Mammary epithelial cell (primary cell): ENCODE measurements at regions of chr6 and their contacts with region 1.

Region 1: GRCh38 chr6:149190224-149190831 is 127.2 kb upstream of the TAB2 start:
- DNase-seq: peak; percentile 57
- H3K4me3 ChIP-seq: no peak overlapping the region
- H3K27ac ChIP-seq: no peak overlapping the region
- H3K4me1 ChIP-seq: no peaks in the 10 kb centered on the region
- H3K27me3 ChIP-seq: no peaks in the 10 kb centered on the region
- CTCF ChIP-seq: peak; percentile 40 to 59

Region 2: DNA sequence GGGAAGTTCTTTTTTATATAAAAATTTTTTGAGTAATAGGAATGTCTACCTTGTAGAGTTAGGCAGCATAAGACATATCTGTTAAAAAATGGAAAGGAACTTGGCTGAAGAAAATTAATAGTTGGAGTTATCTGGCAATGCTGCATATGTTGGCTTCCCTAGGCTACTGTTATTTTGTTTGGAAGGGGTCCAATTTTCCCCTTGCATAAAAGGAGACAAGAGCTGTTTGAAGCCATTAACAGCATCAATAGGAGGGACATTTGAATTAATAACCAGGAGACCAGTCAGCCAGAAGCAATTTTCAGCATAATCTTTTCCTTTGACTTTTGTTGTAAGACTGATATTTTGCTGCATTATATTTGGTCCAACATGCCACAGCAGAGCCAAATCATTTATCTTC is 46.3 kb after region 1 on chr6:
- CTCF ChIA-PET with region 1: no interaction called
- dilution Hi-C with region 1: no loop called
- in situ Hi-C with region 1: no loop called
- intact Hi-C with region 1: no loop called
- DNase-seq: no peak
- H3K4me3 ChIP-seq: no peak overlapping the region
- H3K27ac ChIP-seq: no peak overlapping the region
- H3K4me1 ChIP-seq: peaks cover 32% of the 10 kb centered on the region
- H3K27me3 ChIP-seq: no peaks in the 10 kb centered on the region
- CTCF ChIP-seq: no peak

Region 3: GRCh38 chr6:149259753-149260152 is 69.4 kb after region 1 on chr6:
- CTCF ChIA-PET with region 1: no interaction called
- dilution Hi-C with region 1: no loop called
- in situ Hi-C with region 1: no loop called
- intact Hi-C with region 1: loop called (anchors 10 kb)
- DNase-seq: no peak
- H3K4me3 ChIP-seq: no peak overlapping the region
- H3K27ac ChIP-seq: no peak overlapping the region
- H3K4me1 ChIP-seq: no peaks in the 10 kb centered on the region
- H3K27me3 ChIP-seq: no peaks in the 10 kb centered on the region
- CTCF ChIP-seq: no peak

Region 4: GRCh38 chr6:149405823-149406765 is 215.8 kb after region 1 on chr6:
- CTCF ChIA-PET with region 1: no interaction called
- dilution Hi-C with region 1: loop called (anchors 25 kb)
- in situ Hi-C with region 1: no loop called
- intact Hi-C with region 1: no loop called
- DNase-seq: peak; percentile 19
- H3K4me3 ChIP-seq: no peak overlapping the region
- H3K27ac ChIP-seq: no peak overlapping the region
- H3K4me1 ChIP-seq: peaks cover 5% of the 10 kb centered on the region
- H3K27me3 ChIP-seq: no peaks in the 10 kb centered on the region
- CTCF ChIP-seq: no peak